Mammary epithelial cell (primary cell): ENCODE measurements at regions of chr5 and their contacts with region 1.

Region 1: DNA sequence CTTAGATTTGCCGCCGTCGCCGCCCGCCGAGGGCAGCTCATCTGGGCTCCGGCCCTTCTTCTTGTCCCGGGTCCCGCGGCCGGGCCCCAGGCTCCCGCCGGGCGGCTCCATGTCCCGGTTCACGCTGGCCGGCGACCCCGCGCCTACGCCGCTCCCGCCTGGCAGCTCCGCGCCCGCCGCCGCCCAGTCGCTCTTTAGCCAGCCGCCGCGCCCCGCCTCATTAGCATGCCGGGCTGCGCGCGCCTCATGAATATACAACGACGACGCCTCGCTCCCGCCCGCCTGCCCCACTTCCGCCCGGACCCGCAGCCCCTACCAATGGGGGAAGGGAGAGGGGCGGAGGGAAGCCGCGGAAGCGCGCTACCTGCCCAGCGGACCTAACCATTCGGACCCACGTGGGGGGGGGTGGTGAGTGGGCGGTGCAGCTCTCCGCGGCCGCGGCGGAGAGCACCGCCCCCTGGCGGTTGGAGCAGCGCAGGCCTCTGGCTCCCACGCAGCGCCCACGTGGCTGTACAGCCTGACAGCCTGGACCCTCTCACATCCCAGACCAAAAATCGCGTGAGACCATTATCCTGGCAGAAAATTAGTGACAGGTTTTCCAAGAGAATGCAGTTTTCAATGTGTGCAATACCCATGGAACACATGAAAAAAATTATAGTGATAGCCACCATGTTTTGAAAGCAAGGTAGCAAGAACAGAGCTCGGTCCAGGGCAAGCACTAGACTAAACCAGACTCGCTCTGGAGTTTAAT is at the start of gene DIAPH1:
- DNase-seq: peak; percentile 97
- H3K4me3 ChIP-seq: peak within 1 kb of the TSS; percentile 71 to 100 (median 82)
- H3K27ac ChIP-seq: peak within 1 kb of the TSS; percentile 92
- H3K4me1 ChIP-seq: peaks cover 23% of the 10 kb centered on the region
- H3K27me3 ChIP-seq: no peaks in the 10 kb centered on the region
- CTCF ChIP-seq: peak; percentile 77 to 100
- total RNA-seq, gene DIAPH1: 52.0 to 178 TPM

Region 2: GRCh38 chr5:141570655-141571054 is 48.3 kb before region 1 on chr5:
- CTCF ChIA-PET with region 1: no interaction called
- dilution Hi-C with region 1: loop called (anchors 5 kb)
- in situ Hi-C with region 1: no loop called
- intact Hi-C with region 1: no loop called
- DNase-seq: no peak
- H3K4me3 ChIP-seq: no peak overlapping the region
- H3K27ac ChIP-seq: no peak overlapping the region
- H3K4me1 ChIP-seq: no peaks in the 10 kb centered on the region
- H3K27me3 ChIP-seq: no peaks in the 10 kb centered on the region
- CTCF ChIP-seq: no peak

Region 3: GRCh38 chr5:141585594-141585993 is 33.4 kb before region 1 on chr5:
- CTCF ChIA-PET with region 1: no interaction called
- dilution Hi-C with region 1: no loop called
- in situ Hi-C with region 1: loop called in 1 of 2 experiments (anchors 5 kb)
- intact Hi-C with region 1: no loop called
- DNase-seq: no peak
- H3K4me3 ChIP-seq: no peak overlapping the region
- H3K27ac ChIP-seq: no peak overlapping the region
- H3K4me1 ChIP-seq: no peaks in the 10 kb centered on the region
- H3K27me3 ChIP-seq: no peaks in the 10 kb centered on the region
- CTCF ChIP-seq: no peak

Region 4: DNA sequence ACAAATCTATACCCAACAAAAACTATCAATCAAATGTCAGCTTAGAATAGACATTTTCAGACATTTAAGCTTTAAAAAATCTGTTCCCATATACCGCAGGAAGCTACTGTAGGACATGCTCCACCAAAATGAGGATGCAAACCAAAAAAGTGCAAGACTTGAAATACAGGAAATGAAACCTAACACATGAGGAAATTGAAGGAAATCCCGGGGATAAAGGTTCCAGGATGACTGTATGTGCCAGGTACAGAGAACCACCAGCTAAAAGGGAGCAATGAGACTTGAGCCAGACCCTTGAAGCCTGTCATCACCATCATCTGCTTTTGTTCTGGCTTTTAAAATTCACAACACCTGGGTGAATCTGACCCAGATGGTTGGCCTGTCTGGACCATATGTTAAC is 21.6 kb before region 1 on chr5:
- CTCF ChIA-PET with region 1: interaction called, 58 read pairs
- dilution Hi-C with region 1: no loop called
- in situ Hi-C with region 1: no loop called
- intact Hi-C with region 1: loop called (anchors 1 kb)
- DNase-seq: peak; percentile 39
- H3K4me3 ChIP-seq: no peak overlapping the region
- H3K27ac ChIP-seq: no peak overlapping the region
- H3K4me1 ChIP-seq: peaks cover 15% of the 10 kb centered on the region
- H3K27me3 ChIP-seq: no peaks in the 10 kb centered on the region
- CTCF ChIP-seq: no peak

Region 5: DNA sequence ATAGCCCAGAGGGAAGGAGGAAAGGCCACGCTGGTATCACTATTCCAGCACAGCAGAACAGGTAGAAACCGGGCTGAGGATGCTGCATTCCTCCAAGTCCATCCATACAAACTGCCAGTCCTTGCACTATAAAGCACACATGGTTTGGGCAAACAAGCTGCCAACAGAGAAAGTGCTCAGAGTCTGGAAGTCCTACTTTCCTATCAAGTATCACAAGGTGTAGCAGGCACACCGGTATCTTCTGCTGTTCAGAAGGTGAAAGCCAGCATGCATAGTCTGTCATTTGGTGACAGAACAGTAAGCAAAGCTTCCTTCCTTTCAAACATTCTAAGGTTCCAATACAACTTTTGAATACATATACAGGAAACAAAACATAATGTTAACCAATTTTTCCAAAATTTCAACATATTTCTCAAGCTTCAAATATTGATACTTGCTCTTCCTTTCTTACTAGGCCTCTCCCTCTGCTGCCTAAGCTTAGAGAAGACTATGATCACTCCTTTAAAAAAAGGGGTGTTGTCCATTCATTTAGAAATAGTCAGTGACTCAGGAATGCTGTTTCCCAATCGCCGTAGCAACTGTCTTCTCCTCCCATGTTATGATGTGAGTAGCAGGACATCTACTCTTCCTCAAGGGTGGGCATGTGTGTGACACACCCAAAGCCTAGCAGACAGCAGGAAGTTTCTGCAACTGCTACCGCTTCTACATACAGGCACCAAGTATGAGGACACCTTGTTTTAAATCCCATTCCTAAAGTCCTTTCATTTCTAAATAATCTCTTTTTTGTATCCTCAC is 14.9 kb before region 1 on chr5:
- CTCF ChIA-PET with region 1: interaction called, 4 read pairs
- dilution Hi-C with region 1: no loop called
- in situ Hi-C with region 1: no loop called
- intact Hi-C with region 1: loop called (anchors 1 kb)
- DNase-seq: peak; percentile 93
- H3K4me3 ChIP-seq: peak overlapping the region in 1 of 3 experiments; percentile 27
- H3K27ac ChIP-seq: peak overlapping the region; percentile 98
- H3K4me1 ChIP-seq: peaks cover 18% of the 10 kb centered on the region
- H3K27me3 ChIP-seq: no peaks in the 10 kb centered on the region
- CTCF ChIP-seq: no peak

Region 6: GRCh38 chr5:141636413-141637122 is 17.6 kb after region 1 on chr5 and contains the starts of genes HDAC3 and RELL2:
- CTCF ChIA-PET with region 1: interaction called, 7 read pairs
- dilution Hi-C with region 1: no loop called
- in situ Hi-C with region 1: no loop called
- intact Hi-C with region 1: loop called (anchors 1 kb)
- DNase-seq: peak; percentile 89
- H3K4me3 ChIP-seq: peak within 1 kb of the TSS; percentile 83 to 86 (median 83)
- H3K27ac ChIP-seq: peak within 1 kb of the TSS; percentile 73
- H3K4me1 ChIP-seq: peaks cover 30% of the 10 kb centered on the region
- H3K27me3 ChIP-seq: no peaks in the 10 kb centered on the region
- CTCF ChIP-seq: no peak
- total RNA-seq, gene HDAC3: 57.7 to 61.5 TPM
- total RNA-seq, gene RELL2: 5.7 to 12.1 TPM